ENCODE measurements at regions of chr22 and their contacts with region 1.

Region 1: GRCh38 chr22:31637938-31638618 is 23.9 kb downstream of the PISD start:
- DNase-seq: peak; percentile 78
- ATAC-seq: peak; percentile 66
- H3K4me3 Mint-ChIP-seq: peak overlapping the region; percentile 65
- H3K27ac Mint-ChIP-seq: peak overlapping the region; percentile 88
- H3K4me1 Mint-ChIP-seq: peaks cover 55% of the 10 kb centered on the region
- H3K27me3 Mint-ChIP-seq: no peaks in the 10 kb centered on the region

Region 2: DNA sequence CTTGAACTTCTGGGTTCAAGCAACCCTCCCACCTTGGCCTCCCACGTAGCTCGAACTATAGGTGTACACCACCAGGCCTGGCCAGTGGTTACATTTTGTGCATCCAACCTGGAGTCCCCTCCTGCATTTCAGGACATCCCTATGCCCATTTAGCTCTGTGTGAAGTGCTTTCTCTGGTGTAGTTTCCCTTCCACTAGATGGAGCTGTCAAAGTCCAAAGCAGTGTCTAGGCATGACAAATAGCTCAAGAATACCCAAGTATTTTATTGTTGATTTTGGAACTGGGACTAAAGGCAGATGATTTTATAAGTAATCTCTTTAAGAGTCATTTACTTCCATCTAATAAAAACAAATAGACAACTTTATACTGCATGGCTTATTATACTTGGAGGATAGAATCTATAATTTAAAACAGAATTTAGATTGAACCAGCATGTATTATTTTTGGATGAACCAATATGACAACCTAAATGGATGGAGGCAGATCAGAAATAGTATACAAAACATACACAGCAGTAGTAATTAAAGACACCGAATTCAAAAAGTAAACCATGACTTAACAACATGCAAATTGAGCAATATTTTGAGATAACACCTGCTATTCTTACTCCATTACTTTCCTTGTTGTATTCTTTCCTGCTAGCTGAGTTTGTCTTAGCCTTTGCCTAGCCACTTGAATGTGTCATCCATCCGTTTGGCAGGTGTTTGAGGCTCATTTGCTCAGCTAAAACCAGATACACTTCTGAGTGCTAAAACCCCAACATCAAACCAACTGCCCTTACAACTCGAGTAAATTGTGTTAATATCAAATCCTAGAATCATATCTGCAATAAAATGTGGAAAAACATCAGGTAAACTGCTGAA is 186.1 kb before region 1 on chr22:
- CTCF ChIA-PET with region 1: interaction called, 17 read pairs
- DNase-seq: no peak
- ATAC-seq: peak; percentile 63
- H3K4me3 Mint-ChIP-seq: no peak overlapping the region
- H3K27ac Mint-ChIP-seq: peak overlapping the region; percentile 23
- H3K4me1 Mint-ChIP-seq: peaks cover 7% of the 10 kb centered on the region
- H3K27me3 Mint-ChIP-seq: no peaks in the 10 kb centered on the region